Right ventricle myocardium superior (tissue), 1 donor: ENCODE measurements at regions of chr6 and their contacts with region 1.

Region 1: DNA sequence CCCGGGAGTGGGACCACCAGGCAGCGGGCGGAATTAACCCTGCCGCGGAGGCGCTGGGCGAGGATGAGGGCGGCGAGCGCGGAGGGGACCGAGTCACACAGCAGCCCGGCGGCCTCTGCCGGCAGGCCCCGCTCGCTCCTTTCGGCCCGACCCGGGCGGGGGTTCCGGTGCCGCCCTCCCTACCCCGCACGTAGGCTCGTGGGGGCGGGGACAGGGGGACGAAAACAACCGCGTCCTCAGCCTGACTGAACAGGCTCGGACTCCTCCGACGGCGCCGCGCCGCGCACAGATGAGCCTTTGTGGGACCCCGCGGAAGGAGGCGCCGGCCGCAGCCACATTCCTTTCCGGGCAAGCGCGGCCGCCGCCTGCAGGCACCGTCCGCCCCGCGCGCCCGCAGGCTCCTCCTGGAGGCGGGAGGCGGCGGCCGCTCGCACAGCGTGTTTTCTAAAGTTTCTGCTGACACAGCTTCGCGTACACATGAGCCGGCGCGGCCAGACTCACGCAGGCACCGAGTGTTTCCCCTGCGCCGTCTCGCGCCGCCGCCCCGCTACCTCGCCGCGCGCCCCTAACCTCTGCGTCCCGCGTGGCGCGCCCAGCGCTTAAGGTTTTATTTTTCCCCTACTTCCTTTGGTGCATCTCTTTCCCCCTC is 244.3 kb downstream of the ARID1B start:
- DNase-seq: peak; percentile 95
- ATAC-seq: peak; percentile 94

Region 2: GRCh38 chr6:156564127-156564806 is 457.2 kb before region 1 on chr6:
- intact Hi-C with region 1: loop called (anchors 10 kb)
- DNase-seq: peak; percentile 87
- ATAC-seq: peak; percentile 97

Region 3: GRCh38 chr6:156686995-156687788 is 334.3 kb before region 1 on chr6:
- intact Hi-C with region 1: loop called (anchors 5 kb)
- DNase-seq: peak; percentile 94
- ATAC-seq: peak; percentile 95

Region 4: DNA sequence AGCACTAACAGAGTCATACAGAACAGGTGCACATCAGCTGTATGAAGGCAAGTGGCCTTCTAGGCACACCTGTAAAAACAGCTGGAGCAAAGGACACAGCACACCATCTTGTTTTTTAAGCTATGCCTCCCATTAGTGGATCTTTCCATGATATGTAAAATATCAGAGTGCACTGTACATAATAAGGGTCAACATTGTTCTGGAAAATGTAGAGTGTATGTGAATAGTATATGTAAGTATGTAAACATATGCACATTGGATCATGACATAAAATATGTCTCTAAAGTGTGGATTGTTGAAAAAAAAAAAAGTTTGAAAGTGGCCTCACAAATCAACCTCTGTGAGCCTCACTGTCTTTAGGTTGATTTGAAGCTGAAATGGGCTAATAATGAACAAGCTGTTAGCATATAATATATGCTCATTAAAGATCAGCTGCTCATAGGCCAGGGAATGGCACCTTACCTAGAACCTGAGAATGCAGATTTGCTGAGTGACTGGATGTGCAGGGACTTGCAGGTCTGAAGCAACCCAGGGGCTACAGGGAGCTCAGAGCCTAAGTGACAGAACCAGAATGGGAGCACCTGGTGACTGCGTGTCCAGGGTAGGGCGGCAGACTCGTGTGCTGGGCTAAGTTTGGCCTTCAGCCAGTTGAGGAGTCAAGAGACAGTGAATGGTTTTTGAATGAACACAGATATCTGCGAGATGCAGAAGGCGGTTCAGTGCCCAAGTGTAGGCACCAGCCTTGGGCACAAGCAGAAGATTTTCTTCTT is 103.2 kb after region 1 on chr6:
- intact Hi-C with region 1: no loop called
- DNase-seq: no peak
- ATAC-seq: no peak

Region 5: DNA sequence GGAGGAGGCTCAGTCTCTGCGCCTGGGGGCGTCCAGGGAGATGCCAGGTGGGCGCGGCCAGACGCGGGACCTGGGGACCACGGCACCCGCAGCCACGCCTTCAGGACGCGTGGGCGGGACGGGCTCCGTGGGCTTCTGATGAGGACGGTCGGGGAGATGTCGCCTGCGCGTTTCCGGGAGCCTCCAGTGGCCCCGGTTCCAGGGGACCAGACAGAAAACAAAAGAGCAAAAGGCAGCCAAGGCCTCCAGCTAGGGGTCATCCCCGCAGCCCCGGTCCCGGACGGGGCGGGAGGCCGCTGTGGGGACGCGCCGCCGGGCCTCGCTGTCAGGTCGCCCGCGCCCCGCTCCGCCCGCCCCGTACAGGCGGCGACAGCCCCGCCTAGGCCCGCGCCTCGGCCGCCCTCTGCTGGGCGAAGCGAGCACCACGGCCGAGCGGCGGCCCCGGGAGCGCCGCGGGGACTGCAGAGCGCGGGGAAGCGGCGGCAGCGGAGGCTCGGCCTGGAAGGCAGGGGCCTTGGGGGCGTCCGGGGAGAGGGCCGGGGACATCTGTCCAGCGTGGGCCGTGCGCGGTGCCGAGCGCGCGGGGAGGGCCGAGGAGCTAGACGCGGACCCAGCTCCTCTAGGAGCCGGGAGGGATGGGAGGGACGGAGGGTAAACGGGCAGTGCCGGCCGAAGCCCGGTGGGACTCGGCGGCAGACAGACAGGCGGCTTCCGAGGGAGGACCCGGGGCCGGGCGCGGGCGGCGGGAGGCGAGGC is 253.2 kb after region 1 on chr6:
- intact Hi-C with region 1: loop called (anchors 5 kb)
- DNase-seq: peak; percentile 85
- ATAC-seq: peak; percentile 99